Heart right ventricle (tissue), 16 donors: ENCODE measurements at regions of chr7 and their contacts with region 1.

Region 1: DNA sequence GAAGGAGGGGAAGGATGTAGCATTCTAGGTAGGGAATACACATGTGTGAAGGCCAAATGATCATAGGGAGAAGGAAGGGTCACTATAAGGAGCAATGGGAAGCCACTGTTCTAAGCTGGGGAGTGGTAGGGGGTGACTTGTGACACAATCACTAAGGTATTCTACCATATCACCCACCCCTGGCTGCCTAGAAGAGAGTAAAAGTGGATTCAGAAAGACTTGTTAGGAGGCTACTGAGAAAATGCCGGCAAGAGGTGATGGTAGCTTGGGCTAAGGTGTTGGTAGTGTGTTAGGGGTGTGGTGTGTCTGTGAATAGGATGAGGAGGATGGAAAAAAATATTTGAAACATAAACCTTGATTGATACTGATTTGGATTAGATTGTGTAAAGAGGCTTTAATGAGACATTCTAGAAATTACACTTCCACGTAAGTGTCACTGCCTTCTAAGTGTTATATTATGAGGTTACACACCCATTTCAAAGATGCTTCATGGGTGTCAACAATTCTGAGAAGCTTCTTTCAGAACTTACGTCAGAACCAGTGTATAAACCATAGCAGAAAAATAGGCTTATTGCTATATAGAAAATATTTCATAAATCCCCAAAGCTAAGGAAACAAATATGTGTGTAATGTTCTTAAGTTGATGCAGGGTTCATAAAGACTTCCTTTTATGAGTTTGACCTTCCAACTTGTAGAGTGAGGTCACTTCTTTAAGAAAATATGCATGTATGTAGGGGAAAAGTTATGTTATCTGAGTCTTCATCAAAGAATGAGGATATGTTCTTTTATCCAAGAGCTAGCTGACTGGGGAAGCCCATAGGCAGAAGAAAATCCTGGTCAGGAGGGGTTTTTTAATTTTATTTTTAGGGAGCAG is 5.6 kb upstream of the BPGM start:
- DNase-seq: no peak
- ATAC-seq: no peak
- H3K4me3 ChIP-seq: no peak overlapping the region
- H3K27ac ChIP-seq: no peak overlapping the region
- H3K4me1 ChIP-seq: peaks cover 0 to 18% (median 9%) of the 10 kb centered on the region in 9 donors
- H3K27me3 ChIP-seq: no peaks in the 10 kb centered on the region
- CTCF ChIP-seq: no peak

Region 2: DNA sequence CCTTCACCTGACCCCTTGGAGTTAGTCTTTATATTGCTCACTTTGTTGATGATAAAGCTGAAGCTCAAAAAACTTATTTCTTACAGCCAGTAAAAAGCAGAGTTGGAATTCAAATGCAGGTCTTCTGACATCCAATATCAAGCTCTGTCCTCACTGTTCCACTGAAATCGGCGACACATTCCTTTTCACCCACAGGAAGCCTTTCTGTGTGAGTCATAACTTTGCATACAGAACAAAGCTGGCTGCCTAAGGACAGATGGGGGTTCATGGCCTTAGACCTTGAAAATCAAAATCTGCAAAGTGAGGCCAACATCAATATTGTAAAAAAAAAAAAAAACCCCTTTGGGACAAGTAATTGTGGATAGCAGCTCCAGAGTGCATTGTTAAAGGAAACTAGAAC is 160.3 kb before region 1 on chr7:
- intact Hi-C with region 1: no loop called
- DNase-seq: no peak
- ATAC-seq: peak in 7 of 8 donors; percentile 43 to 87 (median 73)
- H3K4me3 ChIP-seq: no peak overlapping the region
- H3K27ac ChIP-seq: peak overlapping the region in 2 of 10 donors; percentile 20 to 37
- H3K4me1 ChIP-seq: peaks cover 0 to 16% (median 9%) of the 10 kb centered on the region in 9 donors
- H3K27me3 ChIP-seq: no peaks in the 10 kb centered on the region
- CTCF ChIP-seq: no peak

Region 3: GRCh38 chr7:134619627-134620331 is 21.3 kb before region 1 on chr7:
- intact Hi-C with region 1: loop called in 1 of 10 experiments (anchors 2 kb)
- DNase-seq: no peak
- ATAC-seq: no peak
- H3K4me3 ChIP-seq: no peak overlapping the region
- H3K27ac ChIP-seq: peak overlapping the region in 1 of 10 donors; percentile 34
- H3K4me1 ChIP-seq: peaks cover 0 to 23% (median 0%) of the 10 kb centered on the region in 9 donors
- H3K27me3 ChIP-seq: peaks cover 0 to 17% (median 13%) of the 10 kb centered on the region in 7 donors
- CTCF ChIP-seq: no peak